Activated T-helper 1 cell treated with anti-CD3 and anti-CD28 coated beads, Interleukin-12 subunit alpha, Interleukin-12 subunit beta, Interleukin-2, Interleukin-4 antibody, amounts not matched to agents 30 ng/mL and 10 ng/mL and 1 ng/mL, durations not matched to agents 14 hours and 24 hours and 36 hours (primary cell): ENCODE measurements at regions of chr3 and their contacts with region 1.

Region 1: DNA sequence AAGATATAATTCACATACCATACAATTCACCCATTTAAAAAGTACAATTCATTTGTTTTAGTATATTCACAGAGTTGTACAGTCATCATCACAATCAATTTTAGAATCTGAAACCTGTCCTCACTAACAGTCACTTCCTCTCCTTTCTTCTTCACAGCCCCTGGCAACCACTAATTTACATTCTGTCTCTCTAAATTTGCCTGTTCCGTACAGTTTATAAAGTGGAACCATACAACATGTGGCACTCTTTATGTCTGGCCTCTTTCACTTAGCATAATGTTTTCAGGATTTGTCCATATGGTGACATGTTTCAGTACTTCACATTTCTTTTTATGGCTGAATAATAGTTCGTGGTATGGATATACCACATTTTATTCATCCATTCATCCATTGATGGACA is 22.7 kb downstream of the ERICH6 start:
- DNase-seq: no peak
- H3K4me3 Mint-ChIP-seq: no peak overlapping the region
- H3K27ac Mint-ChIP-seq: peak overlapping the region; percentile 7
- H3K4me1 Mint-ChIP-seq: peaks cover 24% of the 10 kb centered on the region
- H3K27me3 Mint-ChIP-seq: peaks cover 4% of the 10 kb centered on the region

Region 2: GRCh38 chr3:150610790-150611189 is 70.3 kb before region 1 on chr3:
- intact Hi-C with region 1: no loop called
- DNase-seq: no peak
- H3K4me3 Mint-ChIP-seq: no peak overlapping the region
- H3K27ac Mint-ChIP-seq: no peak overlapping the region
- H3K4me1 Mint-ChIP-seq: peaks cover 70% of the 10 kb centered on the region
- H3K27me3 Mint-ChIP-seq: no peaks in the 10 kb centered on the region

Region 3: GRCh38 chr3:150643049-150643448 is 38.0 kb before region 1 on chr3:
- intact Hi-C with region 1: loop called (anchors 5 kb)
- DNase-seq: no peak
- H3K4me3 Mint-ChIP-seq: no peak overlapping the region
- H3K27ac Mint-ChIP-seq: no peak overlapping the region
- H3K4me1 Mint-ChIP-seq: no peaks in the 10 kb centered on the region
- H3K27me3 Mint-ChIP-seq: peaks cover 9% of the 10 kb centered on the region

Region 4: DNA sequence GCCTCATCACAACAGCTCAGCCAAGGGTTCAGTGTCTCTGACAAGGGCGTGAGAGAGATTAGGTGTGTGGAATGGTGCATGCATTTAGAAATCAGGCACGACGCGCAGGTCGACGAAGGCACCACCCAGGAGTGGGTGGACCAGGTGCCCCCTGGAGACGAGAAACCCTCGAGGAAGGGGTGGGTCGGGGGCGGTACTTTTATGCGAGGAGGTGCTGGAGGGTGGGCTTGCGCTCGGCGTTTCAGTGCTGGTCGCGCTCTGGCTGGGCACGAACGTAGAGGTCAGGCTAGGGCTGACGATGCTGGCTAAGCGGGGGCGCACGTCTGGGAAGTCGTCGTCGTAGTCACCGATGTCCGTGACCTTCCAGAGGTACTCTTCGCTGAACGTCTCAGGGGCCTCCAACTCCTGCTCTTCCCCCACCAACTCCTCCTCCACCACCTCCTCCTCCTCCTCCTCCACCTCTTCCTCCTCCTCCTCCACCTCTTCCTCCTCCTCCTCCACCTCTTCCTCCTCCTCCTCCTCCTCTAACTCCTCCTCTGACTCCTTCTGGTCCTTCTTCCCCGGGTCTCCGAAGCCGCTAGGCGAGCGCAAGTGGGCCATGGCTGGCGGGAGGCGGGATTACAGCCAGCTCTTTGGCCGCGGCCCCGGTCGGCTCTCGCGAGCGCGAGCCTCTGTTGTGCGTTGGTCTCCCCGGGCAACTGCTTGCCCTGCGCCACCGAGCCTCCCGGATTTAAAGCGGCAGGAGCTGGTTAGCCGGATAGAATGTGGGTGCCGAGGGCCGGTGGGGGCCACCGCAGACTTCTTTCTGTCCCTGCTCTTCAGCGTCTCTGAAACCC is 22.5 kb after region 1 on chr3 and contains the start of gene ERICH6:
- intact Hi-C with region 1: loop called (anchors 2 kb)
- DNase-seq: peak; percentile 81
- H3K4me3 Mint-ChIP-seq: peak within 1 kb of the TSS; percentile 93
- H3K27ac Mint-ChIP-seq: peak within 1 kb of the TSS; percentile 99
- H3K4me1 Mint-ChIP-seq: peaks cover 23% of the 10 kb centered on the region
- H3K27me3 Mint-ChIP-seq: no peaks in the 10 kb centered on the region
- total RNA-seq, gene ERICH6: not detected in 2 replicates